Panc1 (cell line): ENCODE measurements at regions of chr12 and their contacts with region 1.

Region 1: GRCh38 chr12:73225371-73225937 is 953.3 kb downstream of the TRHDE start:
- DNase-seq: no peak
- ATAC-seq: no peak
- H3K4me3 ChIP-seq: no peak overlapping the region
- H3K27ac ChIP-seq: no peak overlapping the region
- H3K4me1 ChIP-seq: no peaks in the 10 kb centered on the region
- H3K27me3 ChIP-seq: no peaks in the 10 kb centered on the region
- CTCF ChIP-seq: no peak

Region 2: DNA sequence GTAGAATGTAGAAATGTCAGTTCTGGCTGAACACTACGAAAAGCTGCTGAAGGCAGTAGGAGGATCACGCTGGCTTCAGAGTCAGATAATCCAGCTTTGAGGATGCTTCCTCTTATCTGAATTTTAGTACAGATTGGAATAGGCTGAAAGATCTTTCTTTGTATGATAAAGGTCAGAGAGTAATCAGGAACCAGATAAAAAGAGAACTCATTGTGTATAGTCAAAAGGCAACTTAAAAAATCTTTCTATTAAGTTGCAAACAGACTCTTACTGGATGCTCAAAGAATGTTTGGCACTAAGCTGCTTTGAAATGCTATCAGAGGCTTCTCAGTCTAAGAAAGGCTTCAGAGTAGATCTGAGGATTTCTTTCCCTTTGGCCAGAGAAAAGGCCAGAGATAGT is 975.1 kb before region 1 on chr12:
- CTCF ChIA-PET with region 1: no interaction called
- POLR2A ChIA-PET with region 1: no interaction called
- in situ Hi-C with region 1: no loop called
- intact Hi-C with region 1: loop called (anchors 5 kb)
- DNase-seq: no peak
- ATAC-seq: no peak
- H3K4me3 ChIP-seq: no peak overlapping the region
- H3K27ac ChIP-seq: no peak overlapping the region
- H3K4me1 ChIP-seq: no peaks in the 10 kb centered on the region
- H3K27me3 ChIP-seq: no peaks in the 10 kb centered on the region
- CTCF ChIP-seq: no peak

Region 3: DNA sequence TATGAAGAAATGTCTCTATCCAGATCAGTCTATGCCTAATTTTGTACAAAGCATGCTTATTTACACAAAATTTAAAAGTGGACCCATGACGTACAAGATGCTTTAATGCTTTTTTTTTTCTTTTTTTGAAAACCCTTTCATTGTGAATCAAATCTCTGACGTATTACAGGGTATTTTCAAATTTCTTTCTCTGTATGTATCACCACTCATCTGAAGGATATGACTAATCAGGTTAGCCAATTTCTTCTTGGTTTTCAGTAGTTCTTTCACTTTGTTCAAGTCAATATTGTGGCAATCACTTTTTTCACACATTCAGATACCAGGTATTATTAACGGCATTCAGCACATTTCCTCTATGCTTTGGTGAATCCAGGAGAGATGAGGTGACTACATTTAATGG is 268.0 kb before region 1 on chr12:
- CTCF ChIA-PET with region 1: no interaction called
- POLR2A ChIA-PET with region 1: no interaction called
- in situ Hi-C with region 1: no loop called
- intact Hi-C with region 1: no loop called
- DNase-seq: no peak
- ATAC-seq: no peak
- H3K4me3 ChIP-seq: no peak overlapping the region
- H3K27ac ChIP-seq: no peak overlapping the region
- H3K4me1 ChIP-seq: no peaks in the 10 kb centered on the region
- H3K27me3 ChIP-seq: no peaks in the 10 kb centered on the region
- CTCF ChIP-seq: no peak